ENCODE measurements at regions of chr12 and their contacts with region 1.

Region 1: DNA sequence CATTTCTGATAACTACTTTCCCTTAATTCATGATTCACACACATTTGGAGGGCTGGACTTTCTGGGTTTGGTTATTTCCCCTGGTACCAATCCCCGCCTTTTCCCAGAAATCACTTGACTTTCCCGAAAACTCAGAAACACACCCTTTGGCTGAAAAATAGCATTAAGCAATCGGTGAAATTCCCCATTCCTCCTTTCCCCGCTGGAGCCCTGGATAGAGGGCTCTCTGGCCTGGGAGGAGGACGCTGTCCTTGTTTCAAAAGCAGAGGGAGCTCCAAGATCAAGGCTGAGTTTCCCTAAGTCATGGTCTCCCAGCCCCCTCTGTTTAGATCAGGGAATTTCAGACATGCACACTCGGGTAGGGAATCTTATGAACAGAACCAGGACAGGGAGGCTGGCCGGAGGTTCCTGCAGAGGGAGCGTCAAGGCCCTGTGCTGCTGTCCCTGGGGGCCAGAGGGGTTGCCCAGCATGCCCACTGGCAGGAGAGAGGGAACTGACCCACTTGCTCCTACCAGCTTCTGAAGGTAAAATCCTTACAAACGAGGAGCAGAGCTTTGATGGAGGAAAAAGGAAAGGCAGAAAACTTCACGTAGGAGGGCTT is at the start of gene C1S:
- DNase-seq: peak; percentile 87
- total RNA-seq, gene C1S: 585 to 986 TPM

Region 2: DNA sequence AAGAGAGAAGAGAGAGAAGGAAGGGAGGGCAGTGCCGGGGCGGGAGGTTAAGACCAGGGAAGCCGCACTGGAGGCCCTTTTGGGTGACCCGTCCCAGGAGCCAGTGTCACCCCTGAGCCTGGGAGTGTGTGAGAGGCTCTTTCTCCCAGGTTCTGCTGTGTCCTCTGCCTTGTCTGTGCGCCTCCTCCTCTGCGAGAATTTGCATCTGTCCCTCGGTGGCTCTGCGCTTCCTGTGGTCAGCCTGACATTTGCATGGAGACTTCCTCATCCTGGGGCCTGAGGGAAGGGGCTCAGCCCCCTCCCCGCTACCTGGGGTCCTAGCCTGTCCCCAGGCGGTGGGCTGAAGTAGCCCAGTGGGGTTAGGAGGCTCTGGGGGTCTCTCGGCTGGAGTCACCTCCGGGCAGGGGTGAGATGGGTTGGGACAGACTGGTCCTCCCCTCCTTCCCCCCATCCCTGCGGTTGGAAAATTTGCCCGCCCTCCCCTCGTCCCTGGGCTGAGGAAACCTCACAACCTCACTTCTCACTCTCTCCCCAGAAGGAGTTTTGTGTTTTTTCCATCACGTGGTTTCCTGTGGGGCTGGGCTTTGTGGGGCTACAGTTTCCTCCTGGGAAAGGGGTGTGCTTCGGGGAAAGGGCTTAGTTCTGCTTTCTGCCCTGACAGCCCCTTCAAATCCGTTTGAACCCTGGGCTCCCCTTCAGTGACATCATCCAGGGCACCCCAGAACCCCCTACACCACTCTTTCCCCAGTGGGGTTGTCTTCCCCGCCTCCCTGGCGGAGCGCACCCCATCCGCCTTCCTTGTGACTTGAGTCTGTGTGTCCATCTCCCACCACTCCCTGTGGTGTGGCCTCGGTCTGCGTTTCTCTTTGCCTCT is 106.8 kb before region 1 on chr12:
- intact Hi-C with region 1: no loop called
- DNase-seq: peak; percentile 90

Region 3: DNA sequence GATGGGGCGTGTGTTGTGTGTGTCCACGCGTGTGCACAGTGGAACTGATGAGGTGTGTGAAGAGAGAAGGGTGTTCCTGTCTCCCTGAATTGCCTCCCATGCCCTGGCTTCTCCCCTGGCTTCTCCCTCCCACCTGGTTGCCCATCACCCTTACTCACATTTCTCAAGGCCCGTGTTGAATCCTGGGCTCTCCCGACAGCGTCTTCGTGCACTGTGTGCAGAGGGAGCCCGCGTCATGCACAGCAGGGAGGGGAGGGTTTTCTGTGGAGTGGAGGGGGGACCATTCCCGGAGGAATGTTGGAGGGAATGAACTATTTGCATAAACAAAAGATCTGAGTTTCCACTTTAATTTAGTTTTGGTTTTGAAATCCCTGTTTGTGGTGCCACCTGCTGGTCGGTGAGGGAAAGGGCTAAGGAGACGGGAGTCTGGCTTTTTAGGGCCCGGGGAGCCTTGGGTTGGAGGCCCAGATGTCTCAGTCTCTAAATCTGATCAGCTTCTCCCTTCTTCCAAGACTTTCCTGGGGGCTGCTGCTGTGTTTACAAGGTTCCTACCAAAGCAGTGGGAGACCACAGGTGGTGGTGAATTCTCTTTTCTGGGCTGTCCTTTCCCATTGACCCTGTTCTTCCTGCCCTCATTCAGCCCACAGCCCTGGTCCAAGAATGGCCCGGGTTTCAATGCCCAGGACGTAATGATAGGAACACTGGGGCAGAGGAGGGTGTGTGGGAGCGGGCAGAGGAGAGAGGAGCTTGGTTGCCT is 32.0 kb after region 1 on chr12 and contains the start of gene C1R:
- intact Hi-C with region 1: loop called in 1 of 2 experiments (anchors 2 kb)
- DNase-seq: peak; percentile 96
- total RNA-seq, gene C1R: 1,008 to 1,686 TPM

Measured in posterior vena cava (tissue), 2 donors.